H1 (cell line): ENCODE measurements at regions of chr18 and their contacts with region 1.

Region 1: DNA sequence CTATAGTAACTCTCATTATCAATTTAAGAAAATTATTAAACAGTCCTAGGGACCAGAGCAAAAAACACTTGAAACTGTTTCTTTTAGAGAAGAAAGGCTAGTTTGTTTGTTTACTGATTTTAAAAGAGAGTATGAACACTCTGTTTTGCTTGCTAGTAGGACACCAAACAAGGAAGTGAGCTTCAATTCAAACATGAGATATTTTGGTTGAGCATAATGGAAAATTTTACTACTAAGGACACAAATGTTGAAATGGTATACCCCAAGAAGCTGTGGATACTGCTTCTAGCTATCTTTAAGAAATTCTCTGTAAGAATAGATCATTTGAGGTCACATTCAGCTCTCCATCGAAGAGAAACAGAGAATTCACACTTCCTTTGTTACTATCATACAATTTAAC is 216.3 kb upstream of the SMAD7 start:
- DNase-seq: no peak
- H3K4me3 ChIP-seq: no peak overlapping the region
- H3K27ac ChIP-seq: no peak overlapping the region
- H3K4me1 ChIP-seq: no peaks in the 10 kb centered on the region
- H3K27me3 ChIP-seq: no peaks in the 10 kb centered on the region; a peak in 1 of 7 replicates
- CTCF ChIP-seq: no peak
- EP300 ChIP-seq: no peak
- POLR2A ChIP-seq: no peak
- RAD21 ChIP-seq: no peak

Region 2: GRCh38 chr18:49178736-49179135 is 11.7 kb after region 1 on chr18:
- CTCF ChIA-PET with region 1: interaction called, 10 read pairs
- POLR2A ChIA-PET with region 1: no interaction called
- DNase-seq: no peak
- H3K4me3 ChIP-seq: no peak overlapping the region
- H3K27ac ChIP-seq: no peak overlapping the region
- H3K4me1 ChIP-seq: no peaks in the 10 kb centered on the region
- H3K27me3 ChIP-seq: no peaks in the 10 kb centered on the region
- CTCF ChIP-seq: peak in 2 of 3 experiments; percentile 55 to 56; a peak in 3 of 4 replicates
- EP300 ChIP-seq: no peak
- POLR2A ChIP-seq: no peak
- RAD21 ChIP-seq: peak; percentile 66 to 69